Caco-2 (cell line): ENCODE measurements at regions of chr3 and their contacts with region 1.

Region 1: DNA sequence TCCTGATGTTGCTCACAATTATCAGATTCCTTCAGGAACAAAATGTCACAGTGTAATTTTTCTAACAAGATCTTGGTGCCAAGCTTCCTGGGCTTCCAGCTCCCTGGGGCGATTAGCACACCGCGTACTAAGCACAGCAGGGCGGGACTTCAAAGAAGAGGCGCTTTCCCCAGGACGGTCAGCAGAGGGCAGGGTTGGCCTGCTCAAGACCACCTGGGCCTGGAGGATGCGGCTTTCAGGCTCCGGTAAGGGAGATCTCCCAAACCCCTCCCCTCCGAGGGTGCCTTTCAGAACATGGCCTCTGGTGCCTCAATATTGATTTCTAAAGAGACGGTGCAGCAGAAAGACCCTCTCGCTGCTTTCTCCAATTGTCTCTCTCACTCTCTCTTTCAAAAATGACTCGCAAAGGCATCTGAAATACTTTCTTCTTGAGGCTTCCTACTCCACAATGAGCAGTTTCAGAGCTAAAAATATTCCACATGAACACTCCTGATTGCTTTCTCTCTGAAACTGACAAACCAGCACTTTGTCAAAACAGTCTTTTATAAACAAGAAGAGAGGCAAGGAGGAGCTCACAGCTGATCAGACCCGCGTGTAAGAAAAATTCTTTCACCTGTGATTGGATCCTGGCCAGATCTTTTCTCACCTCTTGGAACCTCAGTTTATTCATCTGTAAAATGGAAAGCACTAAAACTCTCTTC is 154.0 kb downstream of the ADAMTS9 start:
- DNase-seq: peak; percentile 90 to 91
- H3K4me3 ChIP-seq: no peak overlapping the region
- H3K4me3 Mint-ChIP-seq: no peak overlapping the region
- H3K27ac Mint-ChIP-seq: no peak overlapping the region
- H3K4me1 ChIP-seq: peaks cover 16% of the 10 kb centered on the region
- H3K4me1 Mint-ChIP-seq: peaks cover 8% of the 10 kb centered on the region
- H3K27me3 ChIP-seq: no peaks in the 10 kb centered on the region
- H3K27me3 Mint-ChIP-seq: no peaks in the 10 kb centered on the region
- CTCF ChIP-seq: peak; percentile 86 to 89

Region 2: GRCh38 chr3:64300790-64301423 is 232.9 kb before region 1 on chr3:
- CTCF ChIA-PET with region 1: no interaction called
- POLR2A ChIA-PET with region 1: no interaction called
- intact Hi-C with region 1: no loop called
- DNase-seq: no peak
- H3K4me3 ChIP-seq: no peak overlapping the region
- H3K4me3 Mint-ChIP-seq: no peak overlapping the region
- H3K27ac Mint-ChIP-seq: no peak overlapping the region
- H3K4me1 ChIP-seq: no peaks in the 10 kb centered on the region
- H3K4me1 Mint-ChIP-seq: no peaks in the 10 kb centered on the region
- H3K27me3 ChIP-seq: no peaks in the 10 kb centered on the region
- H3K27me3 Mint-ChIP-seq: no peaks in the 10 kb centered on the region
- CTCF ChIP-seq: no peak

Region 3: DNA sequence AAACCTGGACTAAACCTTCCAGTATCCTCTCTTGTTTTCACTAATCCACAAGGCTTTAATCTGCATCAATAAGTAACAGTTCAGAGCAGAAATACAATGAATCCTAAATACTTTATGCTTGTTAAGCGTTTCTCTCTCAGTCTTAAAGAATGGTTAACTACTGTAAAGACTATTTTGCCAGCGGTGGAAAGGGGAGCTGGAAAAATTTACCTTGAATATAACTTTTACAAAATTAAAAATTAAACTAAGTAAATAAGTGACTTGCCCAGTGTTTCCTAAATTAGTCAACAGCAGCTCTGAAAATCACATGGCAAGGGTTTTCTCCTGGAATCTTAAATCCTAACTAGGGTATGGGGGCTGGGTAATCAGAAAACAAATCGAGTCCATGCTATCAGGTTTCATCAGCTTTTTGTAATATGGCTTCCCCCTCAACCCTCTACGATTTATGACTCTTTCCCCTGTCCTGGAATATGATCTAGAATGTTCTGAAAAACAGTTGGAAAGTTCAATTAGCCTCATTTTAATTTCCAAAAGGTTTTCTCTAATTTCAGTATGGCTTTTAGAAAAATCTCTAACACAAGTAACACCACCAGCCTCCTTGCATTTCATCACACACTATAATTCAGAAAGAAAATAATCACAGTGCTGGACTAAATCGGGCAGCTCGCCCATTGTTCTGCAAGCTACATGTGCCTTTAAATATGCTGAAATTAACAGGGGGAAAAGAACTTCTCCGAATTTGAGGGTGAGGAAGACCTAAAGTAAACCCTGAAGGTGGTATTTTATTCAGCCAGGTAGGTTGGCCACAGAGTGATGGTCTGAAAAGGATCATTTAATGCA is 20.5 kb after region 1 on chr3:
- CTCF ChIA-PET with region 1: interaction called, 8 read pairs
- POLR2A ChIA-PET with region 1: no interaction called
- intact Hi-C with region 1: loop called (anchors 1 kb)
- DNase-seq: no peak
- H3K4me3 ChIP-seq: no peak overlapping the region
- H3K4me3 Mint-ChIP-seq: no peak overlapping the region
- H3K27ac Mint-ChIP-seq: no peak overlapping the region
- H3K4me1 ChIP-seq: peaks cover 29% of the 10 kb centered on the region
- H3K4me1 Mint-ChIP-seq: peaks cover 23% of the 10 kb centered on the region
- H3K27me3 ChIP-seq: no peaks in the 10 kb centered on the region
- H3K27me3 Mint-ChIP-seq: peaks cover 3% of the 10 kb centered on the region
- CTCF ChIP-seq: no peak

Region 4: GRCh38 chr3:64666171-64666588 is 132.4 kb after region 1 on chr3:
- CTCF ChIA-PET with region 1: interaction called, 3 read pairs
- POLR2A ChIA-PET with region 1: no interaction called
- intact Hi-C with region 1: loop called (anchors 5 kb)
- DNase-seq: peak in 1 of 2 experiments; percentile 11
- H3K4me3 ChIP-seq: no peak overlapping the region
- H3K4me3 Mint-ChIP-seq: no peak overlapping the region
- H3K27ac Mint-ChIP-seq: no peak overlapping the region
- H3K4me1 ChIP-seq: peaks cover 12% of the 10 kb centered on the region
- H3K4me1 Mint-ChIP-seq: no peaks in the 10 kb centered on the region
- H3K27me3 ChIP-seq: no peaks in the 10 kb centered on the region
- H3K27me3 Mint-ChIP-seq: no peaks in the 10 kb centered on the region
- CTCF ChIP-seq: no peak

Region 5: GRCh38 chr3:64798316-64798715 is 264.5 kb after region 1 on chr3:
- CTCF ChIA-PET with region 1: no interaction called
- POLR2A ChIA-PET with region 1: no interaction called
- intact Hi-C with region 1: no loop called
- DNase-seq: no peak
- H3K4me3 ChIP-seq: no peak overlapping the region
- H3K4me3 Mint-ChIP-seq: no peak overlapping the region
- H3K27ac Mint-ChIP-seq: no peak overlapping the region
- H3K4me1 ChIP-seq: no peaks in the 10 kb centered on the region
- H3K4me1 Mint-ChIP-seq: no peaks in the 10 kb centered on the region
- H3K27me3 ChIP-seq: no peaks in the 10 kb centered on the region
- H3K27me3 Mint-ChIP-seq: no peaks in the 10 kb centered on the region
- CTCF ChIP-seq: no peak

Region 6: DNA sequence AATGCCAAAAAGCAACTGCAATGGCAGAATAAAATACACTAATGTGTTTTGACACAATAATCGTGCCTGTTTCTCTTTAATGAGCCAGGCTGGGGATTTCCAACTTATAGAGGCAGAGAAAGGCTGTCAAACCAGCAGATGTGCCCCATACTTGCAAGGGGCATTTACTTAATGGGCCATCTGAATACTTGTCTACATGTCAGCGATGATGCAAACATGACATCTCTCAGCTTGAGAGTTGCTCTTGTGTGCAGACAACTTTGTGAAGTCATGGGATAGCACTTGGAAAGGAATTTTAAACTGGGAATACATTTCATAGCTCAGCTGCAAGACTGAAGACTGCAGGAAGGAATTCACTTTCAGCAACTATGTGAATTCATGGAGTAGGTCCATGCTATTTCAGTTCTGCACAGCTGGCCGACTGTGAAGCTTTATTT is 281.4 kb after region 1 on chr3:
- CTCF ChIA-PET with region 1: no interaction called
- POLR2A ChIA-PET with region 1: no interaction called
- intact Hi-C with region 1: loop called (anchors 5 kb)
- DNase-seq: no peak
- H3K4me3 ChIP-seq: no peak overlapping the region
- H3K4me3 Mint-ChIP-seq: no peak overlapping the region
- H3K27ac Mint-ChIP-seq: no peak overlapping the region
- H3K4me1 ChIP-seq: no peaks in the 10 kb centered on the region
- H3K4me1 Mint-ChIP-seq: no peaks in the 10 kb centered on the region
- H3K27me3 ChIP-seq: no peaks in the 10 kb centered on the region
- H3K27me3 Mint-ChIP-seq: no peaks in the 10 kb centered on the region
- CTCF ChIP-seq: no peak

Region 7: DNA sequence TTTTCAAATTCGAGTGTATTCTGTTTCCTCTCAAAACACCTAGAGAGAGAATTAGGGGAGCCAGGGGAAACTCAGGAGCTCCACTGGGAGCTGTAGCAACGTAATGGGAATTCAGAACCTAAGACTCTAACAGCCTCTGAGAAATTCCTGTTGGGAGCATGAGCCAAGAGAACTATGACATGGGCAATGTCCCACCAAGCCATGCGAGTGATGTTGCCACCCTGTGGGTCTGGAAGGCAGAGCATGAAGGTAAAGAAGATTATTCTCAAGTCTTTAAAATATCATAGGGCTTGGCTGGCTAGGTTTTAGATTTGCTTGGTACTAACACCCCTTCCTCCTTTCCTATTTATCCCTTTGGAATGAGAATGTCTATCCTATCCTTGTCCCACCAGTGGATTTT is 546.7 kb after region 1 on chr3:
- CTCF ChIA-PET with region 1: no interaction called
- POLR2A ChIA-PET with region 1: no interaction called
- intact Hi-C with region 1: loop called (anchors 1 kb)
- DNase-seq: peak; percentile 26 to 39
- H3K4me3 ChIP-seq: no peak overlapping the region
- H3K4me3 Mint-ChIP-seq: no peak overlapping the region
- H3K27ac Mint-ChIP-seq: no peak overlapping the region
- H3K4me1 ChIP-seq: peaks cover 2% of the 10 kb centered on the region; the same call in 1 of the 2 replicates
- H3K4me1 Mint-ChIP-seq: no peaks in the 10 kb centered on the region
- H3K27me3 ChIP-seq: no peaks in the 10 kb centered on the region
- H3K27me3 Mint-ChIP-seq: no peaks in the 10 kb centered on the region
- CTCF ChIP-seq: peak in 1 of 2 experiments; percentile 47

Region 8: GRCh38 chr3:65439641-65440284 is 906.0 kb after region 1 on chr3:
- CTCF ChIA-PET with region 1: no interaction called
- POLR2A ChIA-PET with region 1: no interaction called
- intact Hi-C with region 1: loop called (anchors 1 kb)
- DNase-seq: peak; percentile 49 to 57
- H3K4me3 ChIP-seq: no peak overlapping the region
- H3K4me3 Mint-ChIP-seq: no peak overlapping the region
- H3K27ac Mint-ChIP-seq: no peak overlapping the region
- H3K4me1 ChIP-seq: no peaks in the 10 kb centered on the region
- H3K4me1 Mint-ChIP-seq: no peaks in the 10 kb centered on the region
- H3K27me3 ChIP-seq: no peaks in the 10 kb centered on the region
- H3K27me3 Mint-ChIP-seq: no peaks in the 10 kb centered on the region
- CTCF ChIP-seq: peak; percentile 50 to 67